ENCODE measurements at regions of chr9 and their contacts with region 1.

Region 1: DNA sequence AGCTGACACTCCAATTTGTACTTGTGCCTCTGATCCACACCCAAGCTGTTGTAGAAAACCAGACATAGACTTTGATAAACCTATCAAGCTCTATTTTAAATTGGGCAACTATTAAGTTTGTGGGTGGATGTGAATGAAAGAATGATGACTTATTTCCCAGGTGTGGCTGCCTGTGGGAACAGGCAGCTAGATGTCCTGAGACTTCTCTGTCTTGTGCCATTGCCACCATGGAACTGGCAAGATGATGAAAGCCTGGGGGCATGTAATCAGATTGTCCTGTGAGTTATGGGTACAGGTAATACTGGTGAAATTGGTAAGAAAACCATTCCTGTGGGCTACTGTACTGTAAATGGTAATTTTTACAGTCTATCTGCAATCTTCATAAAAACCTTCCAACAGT is 57.5 kb downstream of the CEMIP2 start:
- DNase-seq: no peak
- H3K4me3 Mint-ChIP-seq: no peak overlapping the region
- H3K27ac Mint-ChIP-seq: peak overlapping the region; percentile 58
- H3K4me1 Mint-ChIP-seq: peaks cover 16% of the 10 kb centered on the region
- H3K27me3 Mint-ChIP-seq: no peaks in the 10 kb centered on the region

Region 2: DNA sequence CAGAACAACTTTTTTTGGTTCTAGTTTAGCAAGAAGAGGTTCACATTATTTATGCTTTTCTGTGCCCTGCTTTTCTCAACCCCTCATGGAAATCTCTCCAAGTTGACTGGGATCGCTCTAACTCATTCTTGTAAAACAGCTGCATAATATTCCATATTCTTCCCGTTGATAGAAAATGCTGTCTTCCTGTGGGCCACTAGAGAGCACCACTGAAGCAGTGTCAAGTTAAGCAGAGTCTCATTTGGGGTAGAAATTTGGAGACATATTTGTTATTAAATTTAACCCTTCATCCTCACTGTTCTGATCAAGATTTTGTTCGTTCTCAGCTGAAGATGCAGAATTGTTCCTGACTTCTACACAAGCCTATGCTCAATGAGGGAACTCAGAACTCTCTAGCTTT is 82.6 kb before region 1 on chr9:
- CTCF ChIA-PET with region 1: interaction called, 7 read pairs
- POLR2A ChIA-PET with region 1: no interaction called
- intact Hi-C with region 1: loop called (anchors 5 kb)
- DNase-seq: no peak
- H3K4me3 Mint-ChIP-seq: no peak overlapping the region
- H3K27ac Mint-ChIP-seq: no peak overlapping the region
- H3K4me1 Mint-ChIP-seq: no peaks in the 10 kb centered on the region
- H3K27me3 Mint-ChIP-seq: no peaks in the 10 kb centered on the region

Region 3: GRCh38 chr9:71729816-71730526 is 19.1 kb after region 1 on chr9:
- CTCF ChIA-PET with region 1: no interaction called
- POLR2A ChIA-PET with region 1: no interaction called
- intact Hi-C with region 1: no loop called
- DNase-seq: no peak
- H3K4me3 Mint-ChIP-seq: no peak overlapping the region
- H3K27ac Mint-ChIP-seq: no peak overlapping the region
- H3K4me1 Mint-ChIP-seq: peaks cover 13% of the 10 kb centered on the region
- H3K27me3 Mint-ChIP-seq: no peaks in the 10 kb centered on the region

Measured in activated CD4-positive, alpha-beta memory T cell treated with anti-CD3 and anti-CD28 coated beads for 36 hours (primary cell).